ENCODE measurements at regions of chr14 and their contacts with region 1.

Region 1: GRCh38 chr14:31596342-31597095 is 35.3 kb downstream of the NUBPL start:
- DNase-seq: no peak
- H3K4me3 ChIP-seq: no peak overlapping the region
- H3K27ac ChIP-seq: no peak overlapping the region
- H3K4me1 ChIP-seq: no peaks in the 10 kb centered on the region
- H3K27me3 ChIP-seq: no peaks in the 10 kb centered on the region
- CTCF ChIP-seq: no peak
- POLR2A ChIP-seq: no peak

Region 2: DNA sequence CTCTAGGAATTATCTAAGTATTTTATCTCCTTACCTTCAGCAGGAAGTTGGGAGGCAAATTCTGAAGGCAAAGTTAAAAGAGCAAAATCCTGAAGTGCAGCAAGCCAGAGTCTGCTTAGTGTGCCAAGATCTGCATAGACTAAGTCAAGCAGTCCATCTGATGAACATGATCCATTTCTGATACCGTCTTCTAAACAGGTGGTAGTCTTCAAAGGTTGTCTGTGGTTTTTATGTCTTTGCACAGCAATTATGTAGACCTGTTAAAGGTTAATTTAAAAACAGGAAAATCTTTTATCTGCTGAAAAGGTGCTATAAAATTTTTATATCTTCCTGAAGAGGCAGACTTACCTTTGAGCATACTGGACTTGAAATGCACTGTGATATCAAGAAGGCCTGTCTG is 283.6 kb before region 1 on chr14:
- intact Hi-C with region 1: loop called (anchors 5 kb)
- DNase-seq: no peak
- H3K4me3 ChIP-seq: no peak overlapping the region
- H3K27ac ChIP-seq: no peak overlapping the region
- H3K4me1 ChIP-seq: no peaks in the 10 kb centered on the region
- H3K27me3 ChIP-seq: no peaks in the 10 kb centered on the region
- CTCF ChIP-seq: no peak
- POLR2A ChIP-seq: no peak

Region 3: DNA sequence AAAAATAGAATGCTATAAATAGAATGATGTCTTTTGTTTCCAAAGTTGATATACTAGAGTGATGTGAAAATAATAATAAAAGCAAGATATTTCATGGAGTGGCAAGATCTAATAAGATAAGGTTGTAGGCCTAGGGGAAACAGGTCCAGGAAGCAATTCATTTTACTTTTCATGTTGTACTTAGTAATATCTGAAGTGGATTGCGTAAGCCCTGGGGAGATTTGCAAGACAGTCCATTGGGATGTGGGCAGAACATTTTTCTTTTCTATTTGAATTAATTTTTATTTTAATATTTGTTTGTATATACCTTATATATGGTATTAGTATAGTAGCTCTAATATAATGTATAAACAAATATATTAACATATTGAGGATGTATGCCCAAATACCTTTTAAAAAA is 27.8 kb before region 1 on chr14:
- intact Hi-C with region 1: no loop called
- DNase-seq: no peak
- H3K4me3 ChIP-seq: no peak overlapping the region
- H3K27ac ChIP-seq: no peak overlapping the region
- H3K4me1 ChIP-seq: no peaks in the 10 kb centered on the region
- H3K27me3 ChIP-seq: no peaks in the 10 kb centered on the region
- CTCF ChIP-seq: no peak
- POLR2A ChIP-seq: no peak

Region 4: DNA sequence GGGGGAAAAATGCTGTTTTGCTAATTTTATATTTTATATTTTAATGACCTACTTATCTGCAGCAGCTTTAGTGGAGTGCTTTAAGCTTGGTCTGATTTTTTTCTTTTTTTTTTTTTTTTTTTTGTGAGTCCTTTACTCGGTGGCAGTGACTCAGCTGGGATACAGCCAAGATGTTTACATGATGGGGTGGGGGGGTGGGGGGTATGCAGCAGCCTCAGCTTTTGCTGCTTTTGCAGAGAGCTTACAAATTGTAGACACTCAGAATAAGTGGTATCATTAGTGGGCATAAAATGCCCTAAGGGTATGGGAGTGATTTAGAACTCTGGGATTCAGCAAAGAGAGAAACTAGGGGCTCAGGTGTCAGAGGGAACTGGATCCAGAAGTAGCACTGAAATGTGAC is 442.4 kb after region 1 on chr14:
- intact Hi-C with region 1: no loop called
- DNase-seq: no peak
- H3K4me3 ChIP-seq: no peak overlapping the region
- H3K27ac ChIP-seq: no peak overlapping the region
- H3K4me1 ChIP-seq: no peaks in the 10 kb centered on the region
- H3K27me3 ChIP-seq: no peaks in the 10 kb centered on the region
- CTCF ChIP-seq: no peak
- POLR2A ChIP-seq: no peak

Measured in breast epithelium (tissue), 4 donors.